ENCODE measurements at regions of chr19 and their contacts with region 1.

Region 1: GRCh38 chr19:55503502-55504251 is 15.4 kb downstream of the SSC5D start:
- DNase-seq: peak; percentile 71 to 81
- ATAC-seq: peak; percentile 94 to 97
- H3K4me3 ChIP-seq: peak overlapping the region; percentile 38 to 66 (median 47)
- H3K27ac ChIP-seq: peak overlapping the region; percentile 10 to 77 (median 51)
- H3K4me1 ChIP-seq: no peaks in the 10 kb centered on the region
- H3K27me3 ChIP-seq: peaks cover 0 to 16% (median 14%) of the 10 kb centered on the region in 3 donors
- CTCF ChIP-seq: peak; percentile 88 to 98 (median 96)
- POLR2A ChIP-seq: no peak

Region 2: GRCh38 chr19:55146078-55146704 is 357.5 kb before region 1 on chr19:
- in situ Hi-C with region 1: loop called in 1 of 4 experiments (anchors 10 kb)
- intact Hi-C with region 1: no loop called
- DNase-seq: peak in 1 of 2 donors; percentile 52
- ATAC-seq: no peak
- H3K4me3 ChIP-seq: peak overlapping the region; percentile 48 to 65 (median 56)
- H3K27ac ChIP-seq: peak overlapping the region; percentile 82 to 96 (median 93)
- H3K4me1 ChIP-seq: peaks cover 7 to 30% of the 10 kb centered on the region in 2 donors
- H3K27me3 ChIP-seq: peaks cover 14 to 30% (median 30%) of the 10 kb centered on the region in 3 donors
- CTCF ChIP-seq: peak; percentile 30 to 70 (median 56)
- POLR2A ChIP-seq: no peak

Region 3: GRCh38 chr19:55289117-55289796 is 214.4 kb before region 1 on chr19:
- in situ Hi-C with region 1: no loop called
- intact Hi-C with region 1: loop called (anchors 2 kb)
- DNase-seq: no peak
- ATAC-seq: no peak
- H3K4me3 ChIP-seq: no peak overlapping the region
- H3K27ac ChIP-seq: no peak overlapping the region
- H3K4me1 ChIP-seq: no peaks in the 10 kb centered on the region
- H3K27me3 ChIP-seq: no peaks in the 10 kb centered on the region
- CTCF ChIP-seq: no peak
- POLR2A ChIP-seq: no peak

Region 4: GRCh38 chr19:55467236-55468053 is 36.2 kb before region 1 on chr19:
- in situ Hi-C with region 1: no loop called
- intact Hi-C with region 1: loop called (anchors 1 kb)
- DNase-seq: no peak
- ATAC-seq: peak; percentile 50 to 79
- H3K4me3 ChIP-seq: no peak overlapping the region
- H3K27ac ChIP-seq: no peak overlapping the region
- H3K4me1 ChIP-seq: peaks cover under 1 to 1% of the 10 kb centered on the region in 2 donors
- H3K27me3 ChIP-seq: no peaks in the 10 kb centered on the region
- CTCF ChIP-seq: peak; percentile 79 to 98 (median 95)
- POLR2A ChIP-seq: no peak

Region 5: DNA sequence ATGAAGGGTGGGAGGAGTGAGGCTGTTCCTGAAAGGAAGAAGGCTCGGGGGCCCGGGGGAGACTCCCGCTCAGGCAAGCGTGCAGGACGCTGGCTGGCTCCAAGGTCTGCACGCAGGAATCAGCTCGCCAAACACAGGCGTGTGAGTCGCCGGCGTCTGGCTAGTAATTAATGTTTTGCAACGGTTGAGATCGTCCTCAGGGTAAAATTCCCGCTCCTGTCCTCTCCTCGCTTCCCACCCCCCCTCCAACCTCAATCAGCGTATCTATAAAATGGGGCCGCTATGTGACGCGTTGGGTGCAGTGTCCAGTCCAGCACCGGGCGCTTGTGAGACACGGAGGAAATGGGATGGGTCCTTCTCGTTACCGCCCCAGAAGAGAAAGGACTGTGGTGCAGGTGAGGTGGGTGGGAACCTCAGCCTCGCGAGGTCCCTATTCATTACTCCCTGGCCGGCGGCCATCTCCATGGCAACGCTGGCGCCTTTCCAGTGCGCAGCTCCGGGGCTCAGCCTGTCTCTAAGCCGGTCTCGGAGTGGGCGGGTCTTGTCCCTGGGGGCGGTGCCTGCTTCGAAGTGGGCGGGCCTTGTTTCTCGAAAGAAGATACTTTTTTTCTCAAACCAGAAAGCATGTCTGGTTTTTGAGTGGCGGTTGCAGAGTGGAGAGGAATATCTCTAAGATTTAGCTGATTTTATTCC is 83.4 kb after region 1 on chr19:
- in situ Hi-C with region 1: no loop called
- intact Hi-C with region 1: loop called (anchors 5 kb)
- DNase-seq: peak; percentile 77 to 84
- ATAC-seq: peak; percentile 87 to 91
- H3K4me3 ChIP-seq: peak overlapping the region; percentile 35 to 55 (median 50)
- H3K27ac ChIP-seq: no peak overlapping the region
- H3K4me1 ChIP-seq: peaks cover 18 to 20% of the 10 kb centered on the region in 2 donors
- H3K27me3 ChIP-seq: peaks cover 3 to 11% (median 6%) of the 10 kb centered on the region in 3 donors
- CTCF ChIP-seq: no peak
- POLR2A ChIP-seq: no peak